Cardiac septum (tissue), 1 donor: ENCODE measurements at regions of chr12 and their contacts with region 1.

Region 1: DNA sequence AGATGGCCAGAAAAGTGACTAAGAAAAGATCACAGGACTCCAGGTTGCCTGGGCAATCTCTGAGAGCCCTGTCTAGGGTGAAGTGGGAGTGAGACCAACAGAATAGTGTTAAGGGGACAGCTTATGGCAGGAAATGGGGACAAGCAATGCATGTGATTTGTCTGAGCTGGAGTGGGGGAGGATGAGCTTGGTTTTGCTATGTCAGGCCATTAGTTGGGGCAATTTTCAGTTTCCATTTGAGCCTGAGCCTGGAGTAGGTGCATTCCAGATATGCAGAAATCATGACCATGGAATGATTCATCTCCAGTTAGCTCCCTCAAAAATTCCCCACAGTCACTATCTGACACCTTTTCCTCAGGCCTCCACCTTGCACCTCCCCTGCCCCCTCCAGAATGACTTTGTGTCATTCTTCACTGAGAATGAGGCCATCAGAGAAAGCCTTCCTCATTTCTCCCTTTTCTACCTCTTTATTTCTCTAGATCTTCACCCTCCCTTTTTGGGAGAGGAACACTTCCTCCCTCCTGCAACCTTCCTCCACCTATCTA is 150.9 kb upstream of the PLEKHG7 start:
- DNase-seq: no peak

Region 2: GRCh38 chr12:92469837-92470236 is 82.1 kb before region 1 on chr12:
- intact Hi-C with region 1: loop called (anchors 5 kb)
- DNase-seq: peak; percentile 87

Region 3: DNA sequence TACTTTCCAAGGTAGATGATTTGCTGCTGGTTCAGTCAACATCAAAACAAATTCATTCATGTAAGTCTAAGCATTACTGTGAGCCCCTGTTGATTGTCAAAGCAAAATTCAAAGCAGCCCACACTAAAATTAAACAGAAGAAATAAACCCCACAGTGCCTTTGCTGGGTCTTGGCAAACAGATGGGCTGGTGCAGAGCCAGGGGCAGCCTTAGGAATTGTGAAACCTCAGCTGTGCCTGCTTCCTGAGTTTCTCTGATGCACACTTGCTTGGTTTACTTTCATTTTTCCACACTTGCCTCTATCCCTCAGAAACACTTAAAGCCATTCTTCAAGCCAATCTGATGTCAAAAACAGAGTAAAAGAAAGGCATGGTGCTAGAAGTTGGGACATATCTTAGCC is 144.3 kb after region 1 on chr12:
- intact Hi-C with region 1: no loop called
- DNase-seq: no peak

Region 4: GRCh38 chr12:92987362-92987761 is 435.4 kb after region 1 on chr12:
- intact Hi-C with region 1: no loop called
- DNase-seq: no peak

Region 5: DNA sequence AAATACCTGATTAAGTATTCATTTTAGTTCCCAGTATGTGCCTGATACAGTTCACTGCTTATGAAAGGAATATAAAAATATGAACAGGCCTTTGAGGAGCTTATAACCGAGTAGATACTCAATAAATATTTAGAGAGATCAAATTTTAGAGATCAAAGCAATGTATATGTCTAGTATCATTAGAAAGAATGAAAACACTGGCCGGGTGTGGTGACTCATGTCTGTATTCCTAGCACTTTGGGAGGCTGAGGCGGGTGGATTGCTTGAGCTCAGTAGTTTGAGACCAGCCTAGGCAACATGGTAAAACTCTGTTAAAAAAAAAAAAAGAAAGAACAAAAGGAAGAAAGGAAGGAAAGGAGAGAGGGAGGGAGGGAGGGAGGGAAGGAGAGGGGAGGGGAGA is 490.4 kb after region 1 on chr12:
- intact Hi-C with region 1: no loop called
- DNase-seq: no peak